A673 (cell line): ENCODE measurements at regions of chr9 and their contacts with region 1.

Region 1: GRCh38 chr9:68974431-68974830 is 39.5 kb downstream of the PRKACG start:
- DNase-seq: no peak
- H3K4me3 ChIP-seq: no peak overlapping the region
- H3K27ac ChIP-seq: no peak overlapping the region
- H3K4me1 ChIP-seq: peaks cover 4% of the 10 kb centered on the region
- H3K27me3 ChIP-seq: peaks cover 6% of the 10 kb centered on the region
- CTCF ChIP-seq: no peak

Region 2: GRCh38 chr9:68919661-68920060 is 54.8 kb before region 1 on chr9:
- CTCF ChIA-PET with region 1: no interaction called
- POLR2A ChIA-PET with region 1: no interaction called
- intact Hi-C with region 1: loop called (anchors 5 kb)
- DNase-seq: no peak
- H3K4me3 ChIP-seq: no peak overlapping the region
- H3K27ac ChIP-seq: no peak overlapping the region
- H3K4me1 ChIP-seq: no peaks in the 10 kb centered on the region
- H3K27me3 ChIP-seq: peaks cover 11% of the 10 kb centered on the region
- CTCF ChIP-seq: no peak